A673 (cell line): ENCODE measurements at regions of chr5 and their contacts with region 1.

Region 1: GRCh38 chr5:39714036-39714698 is 289.4 kb upstream of the DAB2 start:
- DNase-seq: peak; percentile 60
- H3K4me3 ChIP-seq: no peak overlapping the region
- H3K27ac ChIP-seq: no peak overlapping the region
- H3K4me1 ChIP-seq: peaks cover 3% of the 10 kb centered on the region
- H3K27me3 ChIP-seq: no peaks in the 10 kb centered on the region
- CTCF ChIP-seq: peak; percentile 66

Region 2: DNA sequence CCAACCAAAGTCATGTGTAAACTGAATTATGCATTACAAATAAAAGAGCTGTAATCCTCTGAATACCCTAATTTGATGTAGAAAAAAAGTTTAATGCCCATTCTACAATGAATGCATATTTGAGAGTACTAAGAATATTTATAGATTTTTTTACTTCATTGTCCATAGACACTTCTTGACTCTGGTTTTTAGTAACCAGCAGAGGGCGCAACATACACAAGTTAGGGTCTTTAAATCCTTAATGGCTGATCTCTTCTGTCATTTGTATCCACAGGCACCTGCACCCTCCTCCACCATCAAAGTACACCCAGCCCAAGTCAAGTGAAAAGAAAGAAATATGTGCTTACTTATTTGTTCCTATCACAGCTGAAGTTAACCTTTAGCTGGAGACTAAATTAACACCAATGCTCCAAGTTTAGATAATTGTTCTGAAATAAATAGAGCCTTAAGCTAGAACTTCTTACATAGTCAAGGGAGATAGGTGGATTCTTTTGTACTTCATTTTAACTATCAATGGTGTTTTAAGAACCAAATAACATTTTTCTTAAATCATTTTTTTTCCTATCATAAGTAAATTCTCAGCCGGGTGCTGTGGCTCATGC is 234.8 kb after region 1 on chr5:
- CTCF ChIA-PET with region 1: interaction called, 3 read pairs
- POLR2A ChIA-PET with region 1: no interaction called
- intact Hi-C with region 1: loop called (anchors 5 kb)
- DNase-seq: peak; percentile 83
- H3K4me3 ChIP-seq: no peak overlapping the region
- H3K27ac ChIP-seq: no peak overlapping the region
- H3K4me1 ChIP-seq: no peaks in the 10 kb centered on the region
- H3K27me3 ChIP-seq: no peaks in the 10 kb centered on the region
- CTCF ChIP-seq: peak; percentile 82

Region 3: GRCh38 chr5:39970117-39970798 is 256.1 kb after region 1 on chr5:
- CTCF ChIA-PET with region 1: no interaction called
- POLR2A ChIA-PET with region 1: no interaction called
- intact Hi-C with region 1: no loop called
- DNase-seq: no peak
- H3K4me3 ChIP-seq: no peak overlapping the region
- H3K27ac ChIP-seq: no peak overlapping the region
- H3K4me1 ChIP-seq: no peaks in the 10 kb centered on the region
- H3K27me3 ChIP-seq: no peaks in the 10 kb centered on the region
- CTCF ChIP-seq: no peak

Region 4: DNA sequence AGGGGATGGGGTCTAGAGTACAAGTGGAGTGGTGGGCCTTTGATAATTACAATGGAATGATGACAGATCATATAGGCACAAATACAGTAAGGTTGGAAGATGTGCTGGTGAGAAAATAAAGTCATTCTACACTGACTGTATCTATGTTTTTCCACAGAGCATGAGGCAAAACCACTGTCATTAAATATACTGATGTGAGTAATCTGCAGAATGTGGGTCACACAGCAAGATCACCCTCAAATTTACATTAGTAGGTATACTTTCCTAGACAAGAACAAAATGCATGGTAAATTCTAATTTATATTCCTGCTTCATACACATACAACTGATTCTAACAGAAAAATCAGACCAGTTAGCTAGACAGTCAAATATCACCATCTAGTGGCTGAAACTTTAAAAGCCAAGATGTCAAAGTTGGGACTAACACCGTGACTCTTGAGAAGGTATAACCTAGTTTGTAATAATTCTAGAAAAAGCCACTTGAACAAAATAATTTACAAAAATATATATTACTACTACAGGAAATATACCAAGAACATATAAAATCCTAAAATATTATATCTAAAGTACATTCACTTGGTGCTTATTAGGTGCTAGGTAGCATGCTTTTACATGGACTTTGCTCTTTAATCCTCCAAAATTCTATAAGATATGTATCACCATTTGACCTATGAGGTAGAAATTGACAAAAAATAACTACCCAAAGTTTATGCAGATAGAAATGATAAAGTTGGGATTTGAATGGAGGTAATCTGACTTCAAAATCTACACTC is 1022.1 kb after region 1 on chr5:
- CTCF ChIA-PET with region 1: no interaction called
- POLR2A ChIA-PET with region 1: no interaction called
- intact Hi-C with region 1: loop called (anchors 2 kb)
- DNase-seq: peak; percentile 70
- H3K4me3 ChIP-seq: no peak overlapping the region
- H3K27ac ChIP-seq: no peak overlapping the region
- H3K4me1 ChIP-seq: no peaks in the 10 kb centered on the region
- H3K27me3 ChIP-seq: no peaks in the 10 kb centered on the region
- CTCF ChIP-seq: peak; percentile 79